H1 (cell line): ENCODE measurements at regions of chr13 and their contacts with region 1.

Region 1: GRCh38 chr13:98542568-98543377 is 34.1 kb downstream of the STK24 start:
- DNase-seq: no peak
- H3K4me3 ChIP-seq: no peak overlapping the region
- H3K27ac ChIP-seq: no peak overlapping the region
- H3K4me1 ChIP-seq: peaks cover 7 to 18% (median 12%) of the 10 kb centered on the region in 4 experiments
- H3K27me3 ChIP-seq: no peaks in the 10 kb centered on the region
- CTCF ChIP-seq: no peak
- EP300 ChIP-seq: no peak
- POLR2A ChIP-seq: no peak
- RAD21 ChIP-seq: no peak

Region 2: DNA sequence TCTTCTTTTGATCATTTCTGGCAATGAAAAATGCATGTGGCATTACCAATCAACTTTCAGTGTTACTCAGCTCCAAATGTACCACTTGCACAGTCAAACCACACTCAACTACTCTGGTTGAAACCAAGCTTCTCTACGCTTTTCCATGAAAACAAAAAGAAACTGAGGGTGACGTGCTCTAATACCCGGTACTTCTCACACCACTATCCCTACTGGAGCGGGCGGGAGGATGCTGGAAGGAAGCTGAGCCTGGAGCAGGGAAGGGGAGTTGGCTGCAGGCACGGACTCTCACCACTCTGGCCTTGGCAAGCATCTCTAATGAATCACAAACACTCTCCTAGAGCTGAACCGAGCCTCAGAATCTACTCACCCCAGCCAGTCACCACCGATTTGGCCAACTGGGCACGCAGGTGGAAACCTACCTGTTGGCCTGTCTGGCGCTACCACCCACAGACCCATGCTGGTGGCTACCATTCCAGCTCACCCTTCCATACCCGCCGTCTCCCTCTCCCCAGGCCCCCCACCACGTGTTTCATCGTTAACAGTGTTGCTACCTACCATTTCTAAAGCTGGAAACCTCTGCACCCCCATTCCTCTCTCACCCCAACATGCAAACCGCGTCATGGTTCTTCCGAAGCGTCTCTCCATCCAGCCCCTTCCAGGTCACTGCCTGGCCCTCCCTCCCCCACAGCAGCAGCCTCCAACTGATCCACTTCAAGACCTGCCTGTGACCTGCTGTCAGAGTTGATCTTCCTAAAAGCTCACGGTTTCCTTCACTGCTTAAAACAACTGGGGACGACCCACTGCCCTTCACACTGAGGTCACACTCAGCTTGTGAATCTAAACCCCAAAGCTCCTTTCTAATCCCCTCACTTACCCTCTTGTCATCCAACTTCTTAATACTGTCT is 13.9 kb before region 1 on chr13:
- CTCF ChIA-PET with region 1: interaction called, 47 read pairs
- POLR2A ChIA-PET with region 1: interaction called, 3 read pairs
- DNase-seq: no peak
- H3K4me3 ChIP-seq: no peak overlapping the region
- H3K27ac ChIP-seq: no peak overlapping the region
- H3K4me1 ChIP-seq: peaks cover 0 to 30% (median 14%) of the 10 kb centered on the region in 4 experiments; a peak in 6 of 7 replicates
- H3K27me3 ChIP-seq: no peaks in the 10 kb centered on the region
- CTCF ChIP-seq: no peak
- EP300 ChIP-seq: no peak
- POLR2A ChIP-seq: no peak
- RAD21 ChIP-seq: no peak